MCF 10A (cell line): ENCODE measurements at regions of chr1 and their contacts with region 1.

Region 1: GRCh38 chr1:228043281-228043890 is 36.6 kb downstream of the WNT3A start:
- DNase-seq: peak; percentile 99
- H3K4me3 Mint-ChIP-seq: no peak overlapping the region
- H3K27ac Mint-ChIP-seq: no peak overlapping the region
- H3K4me1 Mint-ChIP-seq: peaks cover 18% of the 10 kb centered on the region
- H3K27me3 Mint-ChIP-seq: no peaks in the 10 kb centered on the region
- CTCF ChIP-seq: no peak

Region 2: GRCh38 chr1:228013935-228014930 is 29.2 kb before region 1 on chr1:
- CTCF ChIA-PET with region 1: interaction called, 4 read pairs
- POLR2A ChIA-PET with region 1: interaction called, 28 read pairs
- intact Hi-C with region 1: no loop called
- DNase-seq: peak; percentile 99
- H3K4me3 Mint-ChIP-seq: no peak overlapping the region
- H3K27ac Mint-ChIP-seq: peak overlapping the region; percentile 69
- H3K4me1 Mint-ChIP-seq: peaks cover 14% of the 10 kb centered on the region
- H3K27me3 Mint-ChIP-seq: no peaks in the 10 kb centered on the region
- CTCF ChIP-seq: no peak

Region 3: DNA sequence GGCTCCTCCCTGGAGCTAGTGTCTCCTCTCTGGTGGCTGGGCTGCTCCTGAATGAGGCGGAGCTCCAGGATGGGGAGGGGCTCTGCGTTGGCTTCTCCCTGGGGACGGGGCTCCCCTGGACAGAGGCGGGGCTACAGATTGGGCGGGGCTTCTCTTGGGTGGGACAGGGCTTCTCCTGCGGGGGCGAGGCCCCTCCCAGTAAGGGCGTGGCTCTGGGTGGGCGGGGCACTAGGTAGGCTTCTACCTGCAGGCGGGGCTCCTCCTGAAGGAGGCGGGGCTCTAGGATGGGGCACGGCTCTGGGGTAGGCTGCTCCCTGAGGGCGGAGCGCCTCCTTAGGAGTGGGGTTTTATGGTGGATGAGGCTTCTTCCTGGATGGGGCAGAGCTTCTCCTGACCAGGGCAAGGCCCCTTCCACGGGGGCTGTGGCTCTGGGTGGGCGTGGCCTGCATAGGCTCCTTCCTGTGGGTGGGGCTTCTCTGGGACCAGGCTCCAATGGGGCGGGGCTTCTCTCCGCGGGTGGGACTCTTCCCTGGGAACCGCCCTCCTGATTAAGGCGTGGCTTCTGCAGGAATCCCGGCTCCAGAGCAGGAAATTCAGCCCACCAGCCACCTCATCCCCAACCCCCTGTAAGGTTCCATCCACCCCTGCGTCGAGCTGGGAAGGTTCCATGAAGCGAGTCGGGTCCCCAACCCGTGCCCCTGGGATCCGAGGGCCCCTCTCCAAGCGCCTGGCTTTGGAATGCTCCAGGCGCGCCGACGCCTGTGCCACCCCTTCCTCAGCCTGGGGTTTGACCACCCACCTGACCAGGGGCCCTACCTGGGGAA is 16.5 kb after region 1 on chr1:
- CTCF ChIA-PET with region 1: interaction called, 5 read pairs
- POLR2A ChIA-PET with region 1: interaction called, 13 read pairs
- intact Hi-C with region 1: no loop called
- DNase-seq: peak; percentile 52
- H3K4me3 Mint-ChIP-seq: no peak overlapping the region
- H3K27ac Mint-ChIP-seq: no peak overlapping the region
- H3K4me1 Mint-ChIP-seq: no peaks in the 10 kb centered on the region
- H3K27me3 Mint-ChIP-seq: peaks cover 38% of the 10 kb centered on the region
- CTCF ChIP-seq: no peak

Region 4: GRCh38 chr1:228285661-228286504 is 242.5 kb after region 1 on chr1:
- CTCF ChIA-PET with region 1: no interaction called
- POLR2A ChIA-PET with region 1: no interaction called
- intact Hi-C with region 1: no loop called
- DNase-seq: no peak
- H3K4me3 Mint-ChIP-seq: no peak overlapping the region
- H3K27ac Mint-ChIP-seq: no peak overlapping the region
- H3K4me1 Mint-ChIP-seq: no peaks in the 10 kb centered on the region
- H3K27me3 Mint-ChIP-seq: no peaks in the 10 kb centered on the region
- CTCF ChIP-seq: no peak